ENCODE measurements at regions of chr14 and their contacts with region 1.

Region 1: GRCh38 chr14:99982537-99983250 is 82.5 kb upstream of the EVL start:
- DNase-seq: peak; percentile 33
- ATAC-seq: peak; percentile 86 to 87

Region 2: DNA sequence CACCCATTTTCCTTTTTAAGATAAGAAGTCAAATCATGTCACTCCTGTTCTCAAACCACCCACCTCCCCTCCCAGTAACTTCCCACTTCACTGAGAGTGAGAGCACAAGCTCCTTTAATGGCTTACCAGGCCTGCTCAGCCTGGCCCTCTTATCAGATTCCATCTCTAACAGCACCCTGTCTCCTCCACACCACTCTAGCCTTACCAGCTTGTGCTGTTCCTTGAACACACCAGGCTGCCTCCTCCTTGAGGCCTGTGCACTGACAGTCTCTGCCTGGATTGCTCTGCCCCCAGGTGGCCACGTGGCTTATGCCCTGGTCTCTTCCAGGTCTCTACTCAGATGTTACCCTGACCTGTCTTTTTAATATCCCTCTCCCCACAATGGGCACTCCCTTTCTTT is 42.4 kb after region 1 on chr14:
- intact Hi-C with region 1: loop called in 1 of 2 experiments (anchors 5 kb)
- DNase-seq: no peak
- ATAC-seq: peak in 1 of 2 donors; percentile 31

Region 3: DNA sequence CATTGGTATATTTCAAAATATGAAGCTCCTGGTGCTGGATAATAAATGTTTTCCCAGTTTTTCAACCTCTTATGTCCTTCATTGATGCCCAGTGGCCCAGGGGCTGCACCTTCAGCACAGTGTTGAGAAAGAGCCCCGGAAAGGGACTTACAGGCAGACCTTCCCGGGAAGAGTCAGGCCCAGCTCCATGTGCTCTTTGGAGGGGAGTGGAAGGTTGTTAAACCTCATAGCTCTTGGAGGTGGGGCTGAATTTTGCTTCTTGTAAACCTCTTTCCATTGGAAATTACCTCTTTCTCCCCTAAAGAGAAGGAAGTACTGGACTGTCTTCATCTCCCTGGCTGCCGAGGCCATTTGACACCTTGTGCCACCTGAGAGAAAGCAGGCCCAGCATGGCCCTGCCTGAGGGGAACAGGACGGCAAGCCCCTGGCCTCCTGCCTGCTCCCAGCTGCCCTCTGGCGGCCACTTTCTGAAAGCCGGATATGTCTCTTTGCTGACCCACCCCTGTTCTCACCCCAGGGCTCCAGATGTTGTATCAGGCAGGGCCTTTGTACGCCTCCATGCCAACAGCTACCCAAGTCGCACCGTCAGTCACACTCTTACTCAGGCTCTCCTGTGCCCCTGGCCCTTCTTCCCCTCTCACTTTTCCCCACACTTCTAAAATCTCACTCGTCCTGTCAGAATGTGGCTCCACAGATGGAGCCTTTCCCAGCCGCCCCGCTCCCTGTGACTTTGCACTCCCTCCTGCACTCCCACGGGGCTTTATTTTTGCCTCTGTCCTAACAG is 125.5 kb after region 1 on chr14:
- intact Hi-C with region 1: loop called (anchors 1 to 5 kb)
- DNase-seq: peak; percentile 88
- ATAC-seq: peak; percentile 78 to 87

Region 4: GRCh38 chr14:100192672-100193416 is 210.2 kb after region 1 on chr14:
- intact Hi-C with region 1: loop called (anchors 2 to 5 kb)
- DNase-seq: peak; percentile 100
- ATAC-seq: peak; percentile 99

Region 5: DNA sequence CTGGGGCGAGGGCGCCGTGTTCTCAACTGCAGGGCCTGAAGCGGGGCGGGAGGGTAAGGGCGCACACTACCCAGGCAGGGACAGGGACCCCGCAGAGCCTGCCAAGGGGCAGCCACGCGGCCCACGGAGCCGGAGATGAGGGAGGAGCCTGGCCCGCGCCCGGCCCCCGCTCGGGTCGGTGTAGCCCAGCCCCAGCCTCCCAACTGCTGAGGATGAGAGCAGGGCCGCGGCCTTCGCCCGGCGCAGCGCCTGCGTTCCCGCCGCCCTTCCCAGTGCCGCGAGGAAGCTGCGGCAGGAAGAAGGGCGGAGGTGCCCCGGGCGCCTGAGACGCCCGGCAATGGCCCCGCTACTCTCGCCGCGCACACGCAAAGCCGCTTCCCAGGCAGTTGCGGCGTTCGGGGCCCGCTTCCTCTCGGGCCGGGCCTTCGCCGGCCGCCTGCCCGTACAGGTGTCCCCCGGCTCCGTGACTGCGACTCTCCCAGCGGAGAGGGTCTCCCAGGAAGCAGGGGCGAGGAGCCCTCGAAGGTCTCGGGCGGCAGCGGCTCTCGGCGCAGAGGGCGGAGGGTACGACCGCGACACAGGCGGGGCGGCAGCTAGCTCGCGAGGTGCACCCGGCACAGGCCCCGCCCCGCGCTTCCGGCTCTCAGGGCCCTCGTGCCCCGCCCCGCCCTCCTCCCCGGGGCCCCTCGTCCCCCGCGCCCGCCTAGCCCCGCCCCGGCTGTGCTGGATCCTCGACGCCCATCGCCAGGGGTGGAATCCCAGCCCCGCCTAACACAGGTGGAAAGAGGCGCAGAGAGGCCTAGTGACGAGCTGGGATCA is 231.5 kb after region 1 on chr14:
- intact Hi-C with region 1: no loop called
- DNase-seq: peak; percentile 95
- ATAC-seq: peak; percentile 98

Region 6: GRCh38 chr14:100383727-100384158 is 401.0 kb after region 1 on chr14:
- intact Hi-C with region 1: loop called in 1 of 2 experiments (anchors 10 kb)
- DNase-seq: peak; percentile 63
- ATAC-seq: peak; percentile 66 to 70

Measured in left cardiac atrium (tissue), 4 donors.